Common myeloid progenitor, CD34-positive (primary cell): ENCODE measurements at regions of chr5 and their contacts with region 1.

Region 1: DNA sequence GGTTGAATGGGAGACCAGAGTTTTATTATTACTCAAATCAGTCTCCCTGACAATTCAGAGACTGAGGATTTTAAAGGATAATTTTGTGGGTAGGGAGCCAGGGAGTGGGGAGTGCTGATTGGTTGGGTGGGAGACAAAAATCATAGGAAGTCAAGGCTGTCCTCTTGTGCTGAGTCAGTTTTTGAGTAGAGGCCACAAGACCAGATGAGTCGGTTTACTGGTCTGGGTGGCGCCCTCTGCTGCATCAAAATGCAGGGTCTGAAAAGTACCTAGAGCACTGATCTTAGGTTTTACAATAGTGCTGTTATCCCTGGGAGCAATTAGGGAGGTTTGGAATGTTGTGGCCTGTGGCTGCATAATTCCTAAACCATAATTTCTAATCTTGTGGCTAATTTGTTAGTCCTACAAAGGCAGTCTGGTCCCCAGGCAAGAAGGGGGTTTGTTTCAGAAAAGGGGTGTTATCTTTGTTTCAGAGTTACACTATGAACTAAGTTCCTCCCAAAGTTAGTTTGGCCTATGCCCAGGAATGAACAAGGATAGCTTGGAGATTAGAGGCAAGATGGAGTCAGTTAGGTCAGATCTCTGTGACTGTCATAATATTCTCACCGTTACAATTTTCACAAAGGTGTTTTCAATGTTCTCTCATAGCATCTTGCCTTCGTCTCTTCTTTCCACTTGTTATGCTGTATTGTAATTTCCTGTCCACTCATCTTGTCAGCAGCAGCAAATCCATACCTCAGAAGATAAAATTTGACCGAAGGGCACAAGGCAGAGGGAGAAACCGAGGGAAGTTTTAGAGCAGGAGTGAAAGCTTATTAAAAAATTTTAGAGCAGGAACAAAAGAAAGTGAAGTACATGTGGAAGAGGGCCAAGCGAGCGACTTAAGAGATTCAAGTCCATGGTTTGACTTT is 59.2 kb upstream of the CLINT1 start:
- DNase-seq: peak; percentile 73 to 80 (median 80)
- H3K4me3 ChIP-seq: peak overlapping the region in 1 of 7 experiments; percentile 70
- H3K27ac ChIP-seq: no peak overlapping the region
- H3K4me1 ChIP-seq: peaks cover 10 to 23% (median 16%) of the 10 kb centered on the region in 4 experiments
- H3K27me3 ChIP-seq: no peaks in the 10 kb centered on the region

Region 2: GRCh38 chr5:157665467-157666100 is 252.6 kb before region 1 on chr5:
- CTCF ChIA-PET with region 1: no interaction called
- POLR2A ChIA-PET with region 1: no interaction called
- DNase-seq: peak in 2 of 3 donors; percentile 16 to 19
- H3K4me3 ChIP-seq: no peak overlapping the region
- H3K27ac ChIP-seq: no peak overlapping the region
- H3K4me1 ChIP-seq: peaks cover 1 to 3% (median 3%) of the 10 kb centered on the region in 4 experiments
- H3K27me3 ChIP-seq: peaks cover 0 to 13% (median 6%) of the 10 kb centered on the region in 5 experiments

Region 3: GRCh38 chr5:157812086-157812485 is 106.1 kb before region 1 on chr5:
- CTCF ChIA-PET with region 1: interaction called, 23 read pairs
- POLR2A ChIA-PET with region 1: no interaction called
- DNase-seq: no peak
- H3K4me3 ChIP-seq: no peak overlapping the region
- H3K27ac ChIP-seq: no peak overlapping the region
- H3K4me1 ChIP-seq: no peaks in the 10 kb centered on the region
- H3K27me3 ChIP-seq: no peaks in the 10 kb centered on the region

Region 4: DNA sequence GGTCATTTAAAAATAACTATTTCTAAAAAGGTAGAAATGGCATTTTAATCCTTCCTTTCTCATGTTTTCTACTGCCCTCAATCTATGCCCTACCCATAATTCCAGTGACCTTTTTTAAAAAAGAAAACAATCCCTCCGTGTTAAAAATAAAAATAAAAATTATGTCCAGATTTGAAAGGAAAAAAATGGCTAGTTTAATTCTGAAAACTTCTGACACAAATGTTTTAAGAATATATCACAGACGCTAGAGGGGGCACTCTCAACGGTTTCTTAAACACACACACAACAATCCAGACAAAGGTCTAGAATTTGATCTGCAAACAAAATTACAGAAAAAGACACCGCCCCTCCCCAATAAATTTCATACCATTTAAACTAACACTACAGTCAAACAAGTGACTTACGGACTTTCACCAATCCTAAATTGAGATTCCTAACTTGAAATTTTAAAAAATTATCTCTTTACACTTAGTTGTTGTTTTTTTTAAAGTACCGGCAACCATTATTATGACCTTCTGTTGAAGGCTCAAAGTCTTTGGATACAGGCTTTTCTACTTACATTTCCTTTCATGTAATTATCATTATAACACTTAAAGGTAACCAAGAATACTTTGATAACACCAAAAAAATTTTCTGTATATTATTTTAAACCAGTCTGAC is 97.4 kb before region 1 on chr5:
- CTCF ChIA-PET with region 1: interaction called, 10 read pairs
- POLR2A ChIA-PET with region 1: no interaction called
- DNase-seq: peak; percentile 72 to 87 (median 87)
- H3K4me3 ChIP-seq: no peak overlapping the region
- H3K27ac ChIP-seq: no peak overlapping the region
- H3K4me1 ChIP-seq: peaks cover 0 to 25% (median 3%) of the 10 kb centered on the region in 4 experiments
- H3K27me3 ChIP-seq: no peaks in the 10 kb centered on the region

Region 5: GRCh38 chr5:159616952-159617351 is 1698.8 kb after region 1 on chr5:
- CTCF ChIA-PET with region 1: no interaction called
- POLR2A ChIA-PET with region 1: no interaction called
- DNase-seq: no peak
- H3K4me3 ChIP-seq: no peak overlapping the region
- H3K27ac ChIP-seq: no peak overlapping the region
- H3K4me1 ChIP-seq: no peaks in the 10 kb centered on the region
- H3K27me3 ChIP-seq: peaks cover 0 to 3% (median 0%) of the 10 kb centered on the region in 5 experiments